Common myeloid progenitor, CD34-positive (primary cell): ENCODE measurements at regions of chr2 and their contacts with region 1.

Region 1: GRCh38 chr2:88669371-88670214 is 21.9 kb upstream of the RPIA start:
- DNase-seq: peak; percentile 39 to 59 (median 46)
- H3K4me3 ChIP-seq: no peak overlapping the region
- H3K27ac ChIP-seq: no peak overlapping the region
- H3K4me1 ChIP-seq: no peaks in the 10 kb centered on the region
- H3K27me3 ChIP-seq: no peaks in the 10 kb centered on the region

Region 2: DNA sequence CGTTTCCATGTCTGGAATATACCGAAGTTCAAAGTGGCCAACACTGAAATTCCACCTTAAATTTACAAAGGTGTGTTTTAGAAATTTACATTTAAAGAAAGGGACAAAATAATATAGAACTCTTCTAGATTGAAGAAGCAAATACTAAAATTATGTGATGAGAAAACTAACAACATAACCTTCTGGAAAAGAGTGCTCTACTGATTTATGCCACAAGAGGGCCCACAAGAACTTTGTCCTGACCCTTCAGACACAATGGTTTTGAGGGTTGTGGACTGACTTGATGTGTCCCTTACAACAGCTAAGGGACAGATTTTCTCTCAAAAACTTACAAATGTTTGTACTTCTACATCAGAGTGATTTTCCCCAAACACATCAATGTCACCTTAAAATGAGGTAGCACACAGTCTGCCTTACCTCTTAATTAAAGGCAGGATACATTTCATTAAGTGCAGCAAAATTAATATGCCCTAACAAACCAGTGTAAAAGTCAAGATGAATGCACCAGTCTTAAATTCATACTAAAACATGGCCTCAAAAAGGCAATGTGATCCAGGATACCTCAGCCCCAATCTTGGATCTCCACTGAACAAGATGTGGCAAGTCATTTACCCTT is 78.5 kb before region 1 on chr2:
- CTCF ChIA-PET with region 1: interaction called, 265 read pairs
- POLR2A ChIA-PET with region 1: interaction called, 4 read pairs
- DNase-seq: peak; percentile 66 to 82 (median 75)
- H3K4me3 ChIP-seq: no peak overlapping the region
- H3K27ac ChIP-seq: no peak overlapping the region
- H3K4me1 ChIP-seq: no peaks in the 10 kb centered on the region
- H3K27me3 ChIP-seq: no peaks in the 10 kb centered on the region

Region 3: GRCh38 chr2:88659538-88659916 is 10.1 kb before region 1 on chr2:
- CTCF ChIA-PET with region 1: interaction called, 16 read pairs
- POLR2A ChIA-PET with region 1: no interaction called
- DNase-seq: no peak
- H3K4me3 ChIP-seq: no peak overlapping the region
- H3K27ac ChIP-seq: no peak overlapping the region
- H3K4me1 ChIP-seq: no peaks in the 10 kb centered on the region
- H3K27me3 ChIP-seq: no peaks in the 10 kb centered on the region

Region 4: DNA sequence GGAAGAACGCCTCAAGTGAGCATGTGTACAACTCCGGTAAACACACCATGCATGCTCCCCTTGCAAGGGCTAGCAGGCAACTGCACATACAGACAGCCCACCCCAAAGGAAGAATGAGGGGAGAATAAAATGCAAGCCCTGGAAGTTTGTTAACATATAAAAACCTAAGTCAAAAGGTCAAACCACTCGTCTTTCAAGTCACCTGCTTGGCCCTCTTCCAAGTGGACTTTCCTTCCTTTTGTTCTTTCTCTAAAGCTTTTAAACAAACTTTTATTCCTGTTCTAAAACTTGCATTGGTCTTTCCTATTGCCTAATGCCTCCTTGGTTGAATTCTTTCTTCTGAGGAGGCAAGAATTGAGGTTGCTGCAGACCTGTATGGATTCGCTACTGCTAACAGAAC is 16.7 kb after region 1 on chr2:
- CTCF ChIA-PET with region 1: interaction called, 16 read pairs
- POLR2A ChIA-PET with region 1: no interaction called
- DNase-seq: no peak
- H3K4me3 ChIP-seq: no peak overlapping the region
- H3K27ac ChIP-seq: no peak overlapping the region
- H3K4me1 ChIP-seq: peaks cover 5 to 12% (median 7%) of the 10 kb centered on the region in 4 experiments
- H3K27me3 ChIP-seq: no peaks in the 10 kb centered on the region

Region 5: GRCh38 chr2:88691339-88692183 is 22.0 kb after region 1 on chr2 and contains the start of gene RPIA:
- CTCF ChIA-PET with region 1: interaction called, 16 read pairs
- POLR2A ChIA-PET with region 1: no interaction called
- DNase-seq: peak; percentile 99 to 100 (median 99)
- H3K4me3 ChIP-seq: peak within 1 kb of the TSS; percentile 73 to 98 (median 86)
- H3K27ac ChIP-seq: peak within 1 kb of the TSS; percentile 62 to 81
- H3K4me1 ChIP-seq: peaks cover 12 to 24% (median 20%) of the 10 kb centered on the region in 4 experiments
- H3K27me3 ChIP-seq: no peaks in the 10 kb centered on the region